ENCODE measurements at regions of chr3 and their contacts with region 1.

Region 1: GRCh38 chr3:172666873-172667694 is 43.8 kb downstream of the NCEH1 start:
- DNase-seq: peak; percentile 87
- ATAC-seq: peak; percentile 94
- H3K4me3 Mint-ChIP-seq: no peak overlapping the region
- H3K27ac Mint-ChIP-seq: no peak overlapping the region
- H3K4me1 Mint-ChIP-seq: peaks cover 14% of the 10 kb centered on the region
- H3K27me3 Mint-ChIP-seq: no peaks in the 10 kb centered on the region
- CTCF ChIP-seq: peak; percentile 69

Region 2: DNA sequence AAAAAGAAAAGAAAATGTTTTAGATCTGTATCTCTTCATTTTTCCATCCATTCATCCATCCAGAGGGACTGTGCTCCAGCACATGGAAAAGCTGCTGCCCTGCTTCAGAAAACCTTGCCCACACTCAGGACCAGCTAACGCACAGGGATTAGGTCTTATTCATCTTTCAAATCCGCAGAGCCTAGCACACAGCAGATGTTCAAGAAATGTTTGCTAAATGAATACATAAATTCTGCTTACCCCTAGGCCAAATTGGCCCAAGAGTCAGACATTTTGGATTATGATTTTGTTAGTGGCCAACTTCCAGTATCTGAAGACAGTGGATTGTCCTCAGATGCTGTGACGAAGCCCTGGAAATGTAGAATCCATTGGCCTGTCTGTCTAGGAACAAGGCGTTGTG is 290.2 kb before region 1 on chr3:
- CTCF ChIA-PET with region 1: no interaction called
- POLR2A ChIA-PET with region 1: no interaction called
- intact Hi-C with region 1: no loop called
- DNase-seq: no peak
- ATAC-seq: no peak
- H3K4me3 Mint-ChIP-seq: no peak overlapping the region
- H3K27ac Mint-ChIP-seq: no peak overlapping the region
- H3K4me1 Mint-ChIP-seq: no peaks in the 10 kb centered on the region
- H3K27me3 Mint-ChIP-seq: no peaks in the 10 kb centered on the region
- CTCF ChIP-seq: no peak

Region 3: GRCh38 chr3:172607305-172608121 is 59.6 kb before region 1 on chr3:
- CTCF ChIA-PET with region 1: interaction called, 14 read pairs
- POLR2A ChIA-PET with region 1: no interaction called
- intact Hi-C with region 1: no loop called
- DNase-seq: no peak
- ATAC-seq: peak; percentile 27
- H3K4me3 Mint-ChIP-seq: no peak overlapping the region
- H3K27ac Mint-ChIP-seq: no peak overlapping the region
- H3K4me1 Mint-ChIP-seq: peaks cover 7% of the 10 kb centered on the region
- H3K27me3 Mint-ChIP-seq: peaks cover 4% of the 10 kb centered on the region
- CTCF ChIP-seq: no peak

Region 4: DNA sequence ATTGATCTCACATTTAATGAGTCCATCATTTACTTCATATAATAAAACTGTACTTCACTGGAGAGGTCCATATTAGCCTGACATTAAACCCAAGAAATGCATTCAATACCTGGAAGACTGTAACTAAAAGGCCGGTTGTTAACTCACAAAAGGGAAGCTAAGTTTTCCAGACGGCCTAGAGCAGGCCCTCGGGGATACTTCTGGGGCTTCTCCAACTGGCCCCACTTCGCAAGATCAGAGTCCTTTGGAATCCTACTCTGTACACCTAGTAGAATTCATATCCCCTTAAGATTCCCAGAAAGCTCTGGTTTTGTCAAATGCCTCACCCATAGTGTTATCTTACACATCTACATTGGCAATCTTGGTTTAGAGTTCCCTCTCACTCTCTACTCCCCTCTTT is 30.6 kb before region 1 on chr3:
- CTCF ChIA-PET with region 1: interaction called, 14 read pairs
- POLR2A ChIA-PET with region 1: no interaction called
- intact Hi-C with region 1: no loop called
- DNase-seq: no peak
- ATAC-seq: no peak
- H3K4me3 Mint-ChIP-seq: no peak overlapping the region
- H3K27ac Mint-ChIP-seq: no peak overlapping the region
- H3K4me1 Mint-ChIP-seq: peaks cover 10% of the 10 kb centered on the region
- H3K27me3 Mint-ChIP-seq: no peaks in the 10 kb centered on the region
- CTCF ChIP-seq: no peak

Region 5: GRCh38 chr3:172653081-172653480 is 14.0 kb before region 1 on chr3:
- CTCF ChIA-PET with region 1: interaction called, 22 read pairs
- POLR2A ChIA-PET with region 1: no interaction called
- intact Hi-C with region 1: no loop called
- DNase-seq: no peak
- ATAC-seq: no peak
- H3K4me3 Mint-ChIP-seq: no peak overlapping the region
- H3K27ac Mint-ChIP-seq: no peak overlapping the region
- H3K4me1 Mint-ChIP-seq: no peaks in the 10 kb centered on the region
- H3K27me3 Mint-ChIP-seq: no peaks in the 10 kb centered on the region
- CTCF ChIP-seq: no peak

Region 6: GRCh38 chr3:172726382-172726781 is 59.3 kb after region 1 on chr3:
- CTCF ChIA-PET with region 1: no interaction called
- POLR2A ChIA-PET with region 1: no interaction called
- intact Hi-C with region 1: no loop called
- DNase-seq: no peak
- ATAC-seq: no peak
- H3K4me3 Mint-ChIP-seq: no peak overlapping the region
- H3K27ac Mint-ChIP-seq: no peak overlapping the region
- H3K4me1 Mint-ChIP-seq: no peaks in the 10 kb centered on the region
- H3K27me3 Mint-ChIP-seq: no peaks in the 10 kb centered on the region
- CTCF ChIP-seq: no peak

Measured in activated CD8-positive, alpha-beta T cell treated with anti-CD3 and anti-CD28 coated beads for 36 hours (primary cell).